ENCODE measurements at regions of chr19 and their contacts with region 1.

Region 1: DNA sequence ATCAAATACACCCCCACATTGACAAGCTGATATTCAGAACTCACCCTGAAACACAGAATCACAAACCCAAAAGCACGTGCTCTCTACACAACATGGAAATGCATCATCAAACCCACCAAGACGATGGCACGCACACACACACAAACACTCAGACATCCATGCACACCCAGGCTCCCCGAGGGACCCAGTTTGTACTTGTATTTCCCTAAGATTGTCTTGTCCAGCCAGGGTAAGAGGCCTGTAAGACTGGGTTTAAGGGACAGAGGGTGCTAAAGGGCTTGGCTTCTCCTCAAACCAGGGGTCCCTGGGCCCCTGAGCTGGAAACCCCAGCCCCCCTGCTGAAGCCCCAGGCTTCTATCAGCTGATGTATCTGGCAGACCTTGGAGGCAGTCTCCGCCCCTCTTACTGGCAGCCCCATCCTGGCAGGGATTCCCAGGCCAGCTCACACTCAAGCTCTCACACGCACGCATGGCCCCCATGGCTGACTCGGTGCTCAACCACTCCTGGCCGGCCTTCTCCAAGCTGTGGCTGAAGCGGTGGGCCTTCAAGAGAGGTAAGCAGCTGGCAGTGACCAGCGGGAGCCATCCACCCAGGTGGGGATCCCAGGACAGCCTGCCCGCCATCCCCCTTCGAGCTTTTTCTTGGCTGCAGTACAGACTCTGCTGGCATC is 6.5 kb downstream of the ARHGEF18 start:
- DNase-seq: no peak
- H3K4me3 Mint-ChIP-seq: no peak overlapping the region
- H3K27ac Mint-ChIP-seq: no peak overlapping the region
- H3K4me1 Mint-ChIP-seq: no peaks in the 10 kb centered on the region
- H3K27me3 Mint-ChIP-seq: peaks cover 21% of the 10 kb centered on the region
- CTCF ChIP-seq: no peak

Region 2: DNA sequence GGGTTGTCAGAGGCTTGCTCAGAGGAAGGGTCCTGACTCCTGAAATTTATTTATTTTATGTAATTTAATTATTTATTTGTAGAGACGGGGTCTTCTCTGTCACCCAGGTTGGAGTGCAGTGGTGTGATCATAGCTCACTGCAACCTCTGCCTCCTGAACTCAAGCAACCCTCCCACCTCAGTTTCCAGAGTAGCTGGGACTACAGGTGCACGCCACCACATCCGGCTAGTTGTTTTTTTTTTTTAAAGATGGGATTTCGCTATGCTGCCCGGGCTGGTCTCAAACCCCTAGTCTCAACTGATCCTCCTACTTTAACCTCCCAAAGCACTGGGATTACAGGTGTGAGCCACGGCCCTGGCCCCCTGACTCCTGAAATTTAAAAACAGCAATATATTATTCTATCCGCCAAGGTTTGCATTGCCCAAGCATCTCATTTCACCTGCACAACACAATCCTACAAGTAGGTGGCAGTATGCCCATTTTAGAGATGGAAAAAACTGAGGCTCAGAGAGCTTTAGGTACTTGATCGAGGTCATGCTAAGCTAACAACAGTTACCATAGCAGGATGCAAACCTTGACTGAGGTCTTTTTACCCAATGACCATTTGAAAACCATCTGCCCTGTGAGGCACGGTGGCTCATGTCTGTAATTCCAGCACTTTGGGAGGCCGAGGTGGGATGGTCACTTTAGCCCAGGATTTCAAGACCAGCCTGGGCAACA is 11.6 kb after region 1 on chr19:
- CTCF ChIA-PET with region 1: interaction called, 13 read pairs
- POLR2A ChIA-PET with region 1: no interaction called
- intact Hi-C with region 1: no loop called
- DNase-seq: peak; percentile 72
- H3K4me3 Mint-ChIP-seq: no peak overlapping the region
- H3K27ac Mint-ChIP-seq: no peak overlapping the region
- H3K4me1 Mint-ChIP-seq: peaks cover 10% of the 10 kb centered on the region
- H3K27me3 Mint-ChIP-seq: peaks cover 28% of the 10 kb centered on the region
- CTCF ChIP-seq: peak; percentile 27

Region 3: GRCh38 chr19:7373862-7374261 is 18.6 kb after region 1 on chr19:
- CTCF ChIA-PET with region 1: interaction called, 21 read pairs
- POLR2A ChIA-PET with region 1: interaction called, 3 read pairs
- intact Hi-C with region 1: no loop called
- DNase-seq: no peak
- H3K4me3 Mint-ChIP-seq: no peak overlapping the region
- H3K27ac Mint-ChIP-seq: no peak overlapping the region
- H3K4me1 Mint-ChIP-seq: peaks cover 5% of the 10 kb centered on the region
- H3K27me3 Mint-ChIP-seq: no peaks in the 10 kb centered on the region
- CTCF ChIP-seq: no peak

Region 4: DNA sequence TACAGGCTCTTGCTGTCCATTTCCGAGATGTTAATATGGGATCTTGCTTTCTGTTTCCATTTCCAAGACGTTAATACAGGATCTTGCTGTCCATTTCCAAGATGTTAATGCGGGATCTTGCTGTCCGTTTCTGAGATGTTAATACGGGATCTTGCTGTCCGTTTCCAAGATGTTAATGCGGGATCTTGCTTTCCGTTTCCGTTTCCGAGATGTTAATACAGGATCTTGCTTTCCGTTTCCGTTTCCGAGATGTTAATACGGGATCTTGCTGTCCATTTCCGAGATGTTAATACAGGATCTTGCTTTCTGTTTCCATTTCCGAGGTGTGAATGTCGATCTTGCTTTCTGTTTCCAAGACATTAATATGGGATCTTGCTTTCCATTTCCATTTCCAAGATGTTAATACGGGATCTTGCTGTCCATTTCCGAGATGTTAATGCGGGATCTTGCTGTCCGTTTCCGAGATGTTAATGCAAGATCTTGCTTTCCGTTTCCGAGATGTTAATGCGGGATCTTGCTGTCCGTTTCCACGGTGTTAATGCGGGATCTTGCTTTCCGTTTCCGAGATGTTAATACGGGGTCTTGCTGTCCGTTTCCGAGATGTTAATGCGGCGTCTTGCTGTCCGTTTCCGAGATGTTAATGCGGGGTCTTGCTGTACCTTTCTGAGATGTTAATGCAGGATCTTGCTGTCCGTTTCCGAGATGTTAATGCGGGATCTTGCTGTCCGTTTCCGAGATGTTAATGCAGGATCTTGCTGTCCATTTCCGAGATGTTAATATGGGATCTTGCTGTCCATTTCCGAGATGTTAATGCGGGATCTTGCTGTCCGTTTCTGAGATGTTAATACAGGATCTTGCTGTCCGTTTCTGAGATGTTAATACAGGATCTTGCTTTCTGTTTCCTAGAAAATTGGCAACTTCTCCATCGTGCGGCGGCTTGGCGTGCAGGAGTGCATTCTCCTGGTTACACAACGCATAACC is 95.2 kb after region 1 on chr19:
- CTCF ChIA-PET with region 1: no interaction called
- POLR2A ChIA-PET with region 1: no interaction called
- intact Hi-C with region 1: no loop called
- DNase-seq: peak; percentile 27
- H3K4me3 Mint-ChIP-seq: no peak overlapping the region
- H3K27ac Mint-ChIP-seq: no peak overlapping the region
- H3K4me1 Mint-ChIP-seq: no peaks in the 10 kb centered on the region
- H3K27me3 Mint-ChIP-seq: no peaks in the 10 kb centered on the region
- CTCF ChIP-seq: no peak

Measured in MCF 10A (cell line).